Motor neuron (in vitro differentiated cells): ENCODE measurements at regions of chr6 and their contacts with region 1.

Region 1: GRCh38 chr6:106556368-106556960 is 72.8 kb downstream of the RTN4IP1 start:
- ATAC-seq: peak in 1 of 8 experiments; percentile 34
- H3K4me3 ChIP-seq: no peak overlapping the region
- H3K27ac ChIP-seq: no peak overlapping the region
- H3K4me1 ChIP-seq: no peaks in the 10 kb centered on the region

Region 2: DNA sequence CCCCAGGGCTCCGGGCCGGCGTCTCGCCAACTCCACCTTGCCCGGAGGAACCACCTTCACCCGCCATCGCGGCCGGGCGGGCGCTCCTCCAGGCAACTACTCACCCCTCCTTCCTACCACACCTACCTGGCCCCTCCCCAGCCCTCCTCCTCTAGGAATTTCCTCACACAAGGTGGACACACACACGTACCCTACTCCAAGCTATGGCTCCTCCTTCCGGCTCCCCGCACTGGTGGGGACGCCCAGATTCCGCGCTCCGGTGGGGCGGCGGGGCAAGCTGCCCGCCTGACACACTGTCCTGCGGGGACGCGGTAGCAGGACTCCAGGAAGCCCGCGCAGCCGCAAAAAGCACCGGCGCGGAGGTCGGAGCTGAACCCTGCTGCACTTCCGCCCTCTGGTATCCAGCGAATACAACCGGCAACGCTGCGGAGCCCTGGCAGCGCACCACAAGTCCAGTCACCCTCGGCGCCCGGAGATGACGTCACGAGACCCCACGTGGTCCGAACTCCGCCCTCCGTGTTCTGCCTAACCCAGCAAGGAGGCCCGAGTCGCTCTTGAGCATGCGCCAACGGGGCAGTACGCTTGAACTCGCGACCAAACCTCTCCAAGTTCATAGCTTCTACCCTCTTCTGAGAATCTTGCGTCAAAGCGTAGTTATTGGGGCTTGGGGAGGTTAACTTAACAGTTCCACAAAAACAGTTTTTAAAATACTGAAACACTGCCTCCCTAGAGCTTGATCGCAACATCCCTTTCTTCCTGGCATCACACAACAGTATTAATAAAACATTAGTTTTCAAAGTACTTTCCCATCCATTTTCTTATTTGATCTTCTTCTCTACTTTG is 230.9 kb before region 1 on chr6 and contains the start of gene ATG5:
- in situ Hi-C with region 1: loop called in 3 of 9 experiments (anchors 25 kb)
- ATAC-seq: peak; percentile 90 to 99 (median 98)
- H3K4me3 ChIP-seq: peak within 1 kb of the TSS; percentile 67 to 90 (median 74)
- H3K27ac ChIP-seq: peak within 1 kb of the TSS; percentile 89 to 92
- H3K4me1 ChIP-seq: peaks cover 0 to 9% of the 10 kb centered on the region in 2 donors
- total RNA-seq, gene ATG5: 19.3 to 39.2 (median 28.4) TPM

Region 3: GRCh38 chr6:106360410-106360988 is 196.0 kb before region 1 on chr6 and contains the start of gene CRYBG1:
- in situ Hi-C with region 1: no loop called
- ATAC-seq: peak; percentile 69 to 96 (median 93)
- H3K4me3 ChIP-seq: peak within 1 kb of the TSS; percentile 32 to 54 (median 53)
- H3K27ac ChIP-seq: no peak within 1 kb of the TSS
- H3K4me1 ChIP-seq: no peaks in the 10 kb centered on the region
- total RNA-seq, gene CRYBG1: 0.42 to 11.6 (median 0.67) TPM

Region 4: GRCh38 chr6:106444777-106445507 is 111.5 kb before region 1 on chr6:
- in situ Hi-C with region 1: loop called in 3 of 9 experiments (anchors 10 to 25 kb)
- ATAC-seq: peak in 5 of 8 experiments; percentile 44 to 78 (median 71)
- H3K4me3 ChIP-seq: no peak overlapping the region
- H3K27ac ChIP-seq: no peak overlapping the region
- H3K4me1 ChIP-seq: no peaks in the 10 kb centered on the region

Region 5: GRCh38 chr6:106451439-106451838 is 105.0 kb before region 1 on chr6:
- in situ Hi-C with region 1: loop called in 3 of 9 experiments (anchors 10 to 25 kb)
- ATAC-seq: no peak
- H3K4me3 ChIP-seq: no peak overlapping the region
- H3K27ac ChIP-seq: no peak overlapping the region
- H3K4me1 ChIP-seq: no peaks in the 10 kb centered on the region

Region 6: DNA sequence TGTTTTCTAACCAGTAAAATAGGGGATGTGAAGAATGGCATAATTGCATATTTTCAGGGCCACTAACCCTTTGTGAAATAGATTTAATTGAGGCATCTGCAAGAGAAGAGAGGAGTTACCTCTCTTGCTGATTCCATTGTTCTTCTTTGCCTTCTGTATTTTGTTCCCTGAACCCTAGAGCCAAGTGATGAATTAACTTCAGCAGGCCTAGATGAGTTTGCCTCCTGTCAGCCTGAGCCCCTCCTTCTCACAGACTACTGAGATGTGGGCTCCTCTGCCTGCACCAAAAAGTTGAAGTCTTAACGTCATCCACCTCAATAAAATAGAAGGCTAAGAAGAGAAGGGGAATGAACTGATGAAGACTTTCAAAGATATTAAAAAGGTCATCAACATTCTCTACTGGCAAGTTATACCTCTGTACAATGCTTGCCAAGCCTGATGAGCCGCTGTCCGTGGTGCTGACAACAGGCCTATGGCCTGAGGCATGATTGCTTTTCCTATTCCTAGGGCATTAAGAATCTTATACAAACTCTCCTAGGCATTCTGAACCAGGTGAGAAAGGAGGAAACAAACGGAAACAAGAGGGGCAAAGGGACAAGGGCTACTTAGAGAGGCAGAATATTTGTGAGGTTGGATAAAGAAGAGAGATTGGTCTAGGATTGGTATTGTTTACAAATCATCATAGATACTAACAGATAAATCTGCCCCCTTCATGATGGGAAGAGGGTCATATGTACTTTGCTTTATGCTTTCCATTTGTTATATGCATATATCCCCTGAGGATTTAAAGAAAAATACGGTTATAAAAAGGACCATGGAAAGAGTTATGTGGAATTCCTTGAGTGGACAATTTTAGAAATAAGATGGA is 371.3 kb after region 1 on chr6:
- in situ Hi-C with region 1: no loop called
- ATAC-seq: peak in 5 of 8 experiments; percentile 40 to 61 (median 57)
- H3K4me3 ChIP-seq: no peak overlapping the region
- H3K27ac ChIP-seq: no peak overlapping the region
- H3K4me1 ChIP-seq: no peaks in the 10 kb centered on the region